GM18951 (cell line): ENCODE measurements at regions of chr15 and their contacts with region 1.

Region 1: DNA sequence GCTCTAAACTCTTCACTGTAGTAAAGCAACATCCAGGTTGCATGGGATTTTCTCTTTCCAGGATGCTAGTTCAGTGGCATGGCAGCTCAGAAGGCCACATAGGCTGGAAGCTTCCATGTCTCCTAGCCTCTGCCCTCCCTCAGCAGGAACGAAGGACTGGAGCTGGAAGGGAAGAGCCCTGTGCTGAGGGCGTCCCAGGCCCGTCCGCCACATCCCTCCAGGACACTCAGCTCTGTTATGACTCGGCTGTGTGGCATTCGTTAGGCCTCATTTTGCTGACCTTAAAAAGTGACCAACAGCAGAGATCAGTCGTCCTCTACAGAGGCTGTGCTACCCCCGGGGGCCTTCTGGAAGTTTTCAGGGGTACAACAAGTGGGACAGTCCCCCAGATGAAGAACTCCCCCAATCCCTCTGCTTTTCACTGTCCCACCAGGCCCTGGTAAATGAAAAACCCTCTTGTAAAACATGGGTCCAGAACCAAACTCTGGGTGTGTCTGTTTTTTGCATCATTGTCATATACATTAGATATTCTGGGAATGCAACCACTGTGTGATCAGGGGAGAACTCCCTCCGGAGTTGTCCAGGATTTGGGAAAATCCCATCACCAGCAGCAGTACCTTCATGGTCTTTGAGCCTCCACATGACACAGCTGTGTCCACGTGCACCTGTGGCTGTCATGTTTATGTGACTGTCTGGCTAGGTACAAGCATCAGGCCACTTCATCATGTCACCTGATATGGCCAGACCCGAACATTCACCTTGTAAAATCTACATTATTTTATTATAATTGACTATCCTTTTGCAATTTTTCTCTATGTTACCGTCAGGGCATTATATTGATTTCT is 149.9 kb downstream of the OR4M2 start:
- POLR2A ChIP-seq: no peak

Region 2: GRCh38 chr15:20356444-20356910 is 1873.7 kb before region 1 on chr15:
- in situ Hi-C with region 1: loop called (anchors 25 kb)
- POLR2A ChIP-seq: no peak

Region 3: GRCh38 chr15:22786868-22787698 is 556.9 kb after region 1 on chr15:
- in situ Hi-C with region 1: no loop called
- POLR2A ChIP-seq: no peak